ENCODE measurements at regions of chr2 and their contacts with region 1.

Region 1: DNA sequence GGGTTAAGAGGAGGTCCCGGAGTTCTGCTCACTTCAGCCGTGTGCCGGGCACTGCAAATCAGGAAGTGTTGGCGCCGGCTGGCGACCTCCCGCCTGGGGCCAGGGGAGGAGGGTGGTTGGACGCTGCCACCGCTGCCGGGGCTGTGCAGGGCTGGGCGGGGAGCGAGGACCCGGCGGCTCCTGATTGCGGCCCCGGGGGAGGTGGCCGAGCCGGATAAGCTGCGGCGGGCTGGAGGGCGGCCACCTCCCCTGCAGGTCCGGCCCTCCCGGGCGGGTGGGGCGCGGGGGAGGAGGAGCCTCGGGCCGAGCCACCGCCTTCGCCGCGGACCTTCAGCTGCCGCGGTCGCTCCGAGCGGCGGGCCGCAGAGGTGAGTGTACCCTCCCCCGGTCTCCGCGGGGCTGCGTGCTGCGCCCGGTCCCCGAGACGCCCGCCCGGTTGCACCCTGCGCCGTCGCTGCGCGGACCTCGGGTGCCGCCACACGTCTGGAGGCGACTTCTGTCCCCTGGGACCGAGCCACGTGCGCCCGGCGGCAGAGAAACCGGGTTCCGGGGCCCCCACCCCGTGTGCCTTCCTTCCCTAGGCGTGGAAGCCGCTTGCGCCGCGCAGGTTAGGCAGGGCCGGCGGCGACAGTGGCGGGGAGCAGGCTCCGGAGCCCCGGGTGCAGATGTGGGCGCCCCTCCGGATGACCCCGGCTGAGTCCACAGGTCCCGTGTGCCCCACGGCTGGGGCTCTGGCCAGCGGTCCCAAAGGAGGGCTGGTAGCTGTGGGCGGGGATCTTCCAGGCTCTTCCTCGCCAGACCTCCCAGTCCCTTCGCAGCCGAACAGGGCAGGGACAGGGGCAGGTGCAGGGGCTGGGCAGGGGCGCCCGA is at the start of gene STEAP3:
- DNase-seq: peak in 1 of 2 donors; percentile 26
- H3K4me3 ChIP-seq: peak within 1 kb of the TSS; percentile 66 to 86 (median 74)
- H3K27ac ChIP-seq: peak within 1 kb of the TSS; percentile 48 to 70
- H3K4me1 ChIP-seq: peaks cover 0 to 10% of the 10 kb centered on the region in 2 donors
- H3K27me3 ChIP-seq: no peaks in the 10 kb centered on the region
- CTCF ChIP-seq: no peak
- POLR2A ChIP-seq: no peak
- total RNA-seq, gene STEAP3: 11.2 to 52.2 (median 49.8) TPM

Region 2: GRCh38 chr2:119196301-119197125 is 27.2 kb before region 1 on chr2:
- intact Hi-C with region 1: no loop called
- DNase-seq: no peak
- H3K4me3 ChIP-seq: no peak overlapping the region
- H3K27ac ChIP-seq: no peak overlapping the region
- H3K4me1 ChIP-seq: no peaks in the 10 kb centered on the region
- H3K27me3 ChIP-seq: no peaks in the 10 kb centered on the region
- CTCF ChIP-seq: no peak
- POLR2A ChIP-seq: no peak

Region 3: DNA sequence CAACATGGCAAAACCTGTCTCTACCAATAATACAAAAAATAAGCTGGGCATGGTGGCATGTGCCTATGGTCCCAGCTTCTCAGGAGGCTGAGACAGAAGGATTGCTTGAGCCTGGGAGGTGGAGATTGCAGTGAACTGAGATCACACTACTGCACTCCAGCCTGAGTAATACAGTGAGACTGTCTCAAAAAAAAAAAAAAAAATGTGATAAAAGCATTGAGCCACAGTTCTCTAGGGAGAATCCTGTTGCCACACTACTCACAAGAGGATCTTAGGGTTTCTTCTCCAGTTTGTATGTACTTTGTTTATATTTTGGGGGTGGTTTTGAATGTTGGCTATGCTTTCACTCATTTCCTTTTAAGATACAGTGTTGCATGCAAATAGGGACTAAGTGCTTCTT is 937.4 kb after region 1 on chr2:
- intact Hi-C with region 1: loop called (anchors 10 kb)
- DNase-seq: no peak
- H3K4me3 ChIP-seq: no peak overlapping the region
- H3K27ac ChIP-seq: no peak overlapping the region
- H3K4me1 ChIP-seq: no peaks in the 10 kb centered on the region
- H3K27me3 ChIP-seq: no peaks in the 10 kb centered on the region
- CTCF ChIP-seq: no peak
- POLR2A ChIP-seq: no peak